ENCODE measurements at regions of chr13 and their contacts with region 1.

Region 1: GRCh38 chr13:113275387-113275786 is 21.7 kb upstream of the LAMP1 start:
- DNase-seq: peak; percentile 84

Region 2: DNA sequence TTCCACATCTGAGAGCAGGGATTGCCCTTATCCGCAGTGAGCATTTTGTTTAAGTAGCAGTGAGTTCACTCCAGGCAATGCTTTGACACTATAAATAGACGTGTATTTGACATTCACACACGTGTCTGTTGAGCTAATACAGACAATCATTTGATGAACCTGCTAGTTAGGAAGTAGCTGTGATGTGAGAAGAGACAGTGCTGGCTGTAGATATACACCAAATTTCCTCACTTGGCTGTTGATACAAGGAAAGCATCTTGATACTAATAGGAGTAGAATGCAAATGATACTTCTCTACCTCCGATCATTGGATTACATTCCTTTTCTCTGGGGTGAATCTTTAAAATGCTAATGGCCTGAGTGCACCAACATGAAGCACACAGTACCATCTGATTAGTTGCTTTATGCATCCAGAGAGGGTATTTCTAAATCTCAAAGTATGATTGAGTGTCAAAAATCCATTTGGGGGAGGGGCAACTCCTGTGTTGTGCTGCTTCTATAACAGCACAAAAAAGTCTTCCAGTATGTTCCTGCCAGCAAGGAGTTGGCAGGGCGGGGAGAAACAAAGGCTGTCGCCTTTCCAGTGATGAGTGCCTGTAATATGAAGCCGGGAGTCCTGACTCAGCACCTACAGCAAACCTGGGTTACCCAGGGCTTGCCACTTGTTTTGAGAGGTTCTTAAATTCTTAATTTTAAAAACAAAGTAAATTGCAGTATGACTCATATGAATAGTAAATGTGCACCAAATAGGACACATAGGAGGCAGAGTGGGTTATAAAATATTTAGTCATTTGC is 58.9 kb before region 1 on chr13:
- intact Hi-C with region 1: no loop called
- DNase-seq: no peak

Region 3: GRCh38 chr13:113337976-113338375 is 62.6 kb after region 1 on chr13:
- intact Hi-C with region 1: loop called in 1 of 2 experiments (anchors 2 kb)
- DNase-seq: no peak

Region 4: DNA sequence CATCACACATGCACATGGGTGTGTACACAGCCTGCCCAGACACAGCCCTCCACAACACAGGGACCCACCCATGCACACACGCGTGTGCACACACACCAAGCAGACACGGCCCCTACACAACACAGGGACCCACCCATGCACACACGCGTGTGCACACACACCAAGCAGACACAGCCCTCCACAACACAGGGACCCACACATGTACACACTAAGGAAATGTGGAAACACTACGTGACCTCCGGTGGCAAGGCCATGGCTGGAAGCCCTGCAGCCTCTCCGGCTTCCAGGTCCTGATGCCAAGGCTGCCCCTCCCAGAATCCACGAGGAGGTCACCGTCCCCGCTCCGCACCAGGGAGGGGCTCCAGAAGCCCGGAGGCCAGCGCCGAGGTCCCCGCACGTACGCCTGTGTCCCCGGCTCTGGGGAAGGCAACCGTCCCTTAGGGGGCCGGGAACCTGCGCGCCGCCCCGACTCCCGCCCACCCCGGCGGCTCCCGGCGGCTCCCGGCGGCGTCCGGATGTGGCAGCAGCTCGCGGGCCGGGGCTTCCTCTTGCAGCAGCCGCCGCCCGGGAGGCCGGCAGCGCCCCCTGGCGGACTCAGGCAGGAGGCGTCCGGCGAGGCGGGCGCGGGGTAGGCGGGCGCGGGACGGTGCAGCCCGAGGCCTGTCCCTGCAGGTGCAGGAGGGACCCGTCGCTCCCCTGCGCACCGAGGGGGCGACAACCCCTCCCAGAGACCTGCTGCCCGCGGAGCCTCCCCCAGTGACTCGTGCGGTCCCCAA is 118.4 kb after region 1 on chr13:
- intact Hi-C with region 1: loop called (anchors 10 kb)
- DNase-seq: peak; percentile 95

Measured in posterior vena cava (tissue), 2 donors.